Ovary (tissue), 10 donors: ENCODE measurements at regions of chr4 and their contacts with region 1.

Region 1: GRCh38 chr4:150217192-150217591 is 138.9 kb downstream of the DCLK2 start:
- DNase-seq: no peak
- H3K4me3 ChIP-seq: no peak overlapping the region
- H3K27ac ChIP-seq: no peak overlapping the region
- H3K4me1 ChIP-seq: peaks cover 1% of the 10 kb centered on the region
- H3K27me3 ChIP-seq: no peaks in the 10 kb centered on the region
- CTCF ChIP-seq: no peak
- EP300 ChIP-seq: no peak
- POLR2A ChIP-seq: no peak

Region 2: DNA sequence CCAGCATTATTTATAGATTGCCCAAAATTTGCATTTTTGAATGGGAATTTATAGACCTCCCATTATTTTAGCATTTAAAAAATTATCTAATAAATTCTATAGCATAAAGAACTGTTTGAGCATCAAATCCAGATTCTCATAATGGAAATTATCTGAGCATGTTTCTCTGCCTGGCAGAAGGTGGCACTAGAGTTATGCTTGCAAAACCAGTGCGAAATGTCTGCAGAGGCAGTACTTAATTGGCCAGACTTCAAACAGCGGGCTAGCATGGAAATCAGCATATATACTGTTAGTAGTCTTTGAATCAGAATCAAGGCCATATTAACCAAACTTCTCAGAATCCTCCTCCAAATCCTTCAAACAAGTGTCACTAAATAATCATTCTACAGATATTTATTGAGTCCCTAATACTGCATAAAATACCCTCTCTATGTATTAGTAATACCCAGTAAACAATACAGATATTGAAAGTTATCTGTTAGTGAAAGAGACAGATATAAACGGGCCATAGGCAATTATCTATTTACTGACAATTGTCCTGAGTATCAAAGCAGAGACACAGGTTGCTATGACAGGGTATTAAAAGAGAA is 217.6 kb before region 1 on chr4:
- intact Hi-C with region 1: loop called in 1 of 4 experiments (anchors 10 kb)
- DNase-seq: peak in 2 of 5 donors; percentile 23
- H3K4me3 ChIP-seq: no peak overlapping the region
- H3K27ac ChIP-seq: no peak overlapping the region
- H3K4me1 ChIP-seq: peaks cover 4% of the 10 kb centered on the region
- H3K27me3 ChIP-seq: no peaks in the 10 kb centered on the region
- CTCF ChIP-seq: peak; percentile 18 to 35 (median 30)
- EP300 ChIP-seq: no peak
- POLR2A ChIP-seq: no peak

Region 3: DNA sequence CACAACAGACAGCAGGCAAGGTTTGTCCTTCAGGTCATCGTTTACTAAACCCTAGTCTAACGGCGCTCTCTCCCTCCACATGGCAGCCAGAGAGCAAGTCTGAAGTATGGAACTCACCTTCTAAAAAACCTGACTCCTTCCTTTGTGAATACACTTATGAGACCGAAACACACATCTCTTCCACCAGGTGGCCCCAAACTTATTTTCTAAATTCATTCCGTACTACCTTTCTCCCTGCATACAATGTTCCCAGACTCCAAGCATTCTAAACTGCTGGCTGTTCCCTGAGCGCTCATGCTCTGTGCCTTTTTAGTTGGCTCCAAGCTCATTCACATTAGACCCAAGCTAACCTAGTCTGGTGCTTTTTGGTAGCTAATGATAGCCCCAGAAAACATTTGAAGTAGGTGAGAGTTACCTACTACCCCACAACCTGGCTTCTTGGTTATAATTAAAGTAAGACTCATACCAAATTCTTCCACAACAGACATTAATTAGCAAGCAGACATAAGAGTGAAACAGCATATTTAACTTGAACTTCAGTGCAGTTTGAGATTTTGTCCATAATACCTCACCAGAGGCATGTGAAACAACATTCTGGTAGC is 206.6 kb before region 1 on chr4:
- intact Hi-C with region 1: loop called in 3 of 4 experiments (anchors 10 kb)
- DNase-seq: peak; percentile 15 to 49 (median 30)
- H3K4me3 ChIP-seq: no peak overlapping the region
- H3K27ac ChIP-seq: no peak overlapping the region
- H3K4me1 ChIP-seq: peaks cover 5% of the 10 kb centered on the region
- H3K27me3 ChIP-seq: no peaks in the 10 kb centered on the region
- CTCF ChIP-seq: peak in 2 of 3 donors; percentile 40 to 42
- EP300 ChIP-seq: no peak
- POLR2A ChIP-seq: no peak

Region 4: DNA sequence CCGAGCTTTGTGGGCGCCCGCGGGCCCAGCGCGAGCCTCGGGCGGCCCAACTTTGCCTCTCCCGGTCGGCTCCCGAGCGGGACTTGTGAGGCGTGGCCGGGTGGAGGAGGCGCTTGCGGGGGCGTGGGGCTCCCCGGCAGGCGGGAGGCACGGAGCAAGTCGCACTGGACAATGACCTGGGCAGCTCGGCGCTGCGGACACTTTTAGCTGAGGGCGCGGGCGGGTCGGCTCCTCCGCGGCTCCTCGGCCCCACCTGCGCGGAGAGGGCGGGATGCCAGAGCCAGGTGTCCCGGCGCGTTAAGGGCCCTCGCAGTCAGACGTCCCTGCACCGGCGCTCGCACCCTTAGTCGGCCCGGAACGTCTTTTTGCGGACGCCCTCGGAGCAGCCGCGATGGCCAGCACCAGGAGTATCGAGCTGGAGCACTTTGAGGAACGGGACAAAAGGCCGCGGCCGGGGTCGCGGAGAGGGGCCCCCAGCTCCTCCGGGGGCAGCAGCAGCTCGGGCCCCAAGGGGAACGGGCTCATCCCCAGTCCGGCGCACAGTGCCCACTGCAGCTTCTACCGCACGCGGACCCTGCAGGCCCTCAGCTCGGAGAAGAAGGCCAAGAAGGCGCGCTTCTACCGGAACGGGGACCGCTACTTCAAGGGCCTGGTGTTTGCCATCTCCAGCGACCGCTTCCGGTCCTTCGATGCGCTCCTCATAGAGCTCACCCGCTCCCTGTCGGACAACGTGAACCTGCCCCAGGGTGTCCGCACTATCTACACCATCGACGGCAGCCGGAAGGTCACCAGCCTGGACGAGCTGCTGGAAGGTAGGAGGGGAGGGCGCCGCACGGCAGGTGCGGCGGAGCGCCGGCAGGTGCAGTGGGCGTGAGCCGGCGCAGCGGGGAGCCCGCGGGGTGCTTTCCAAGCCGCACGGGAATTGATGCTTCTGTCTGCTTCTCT is 138.3 kb before region 1 on chr4:
- intact Hi-C with region 1: loop called in 1 of 4 experiments (anchors 10 kb)
- DNase-seq: peak; percentile 55 to 80 (median 66)
- H3K4me3 ChIP-seq: peak overlapping the region; percentile 57
- H3K27ac ChIP-seq: peak overlapping the region; percentile 83 to 93
- H3K4me1 ChIP-seq: peaks cover 4% of the 10 kb centered on the region
- H3K27me3 ChIP-seq: no peaks in the 10 kb centered on the region
- CTCF ChIP-seq: no peak
- EP300 ChIP-seq: no peak
- POLR2A ChIP-seq: no peak